Activated CD4-positive, alpha-beta T cell treated with anti-CD3 and anti-CD28 coated beads for 36 hours (primary cell): ENCODE measurements at regions of chr2 and their contacts with region 1.

Region 1: GRCh38 chr2:55617175-55618024 is at the start of gene PPP4R3B:
- DNase-seq: peak; percentile 99
- ATAC-seq: peak; percentile 87
- H3K4me3 Mint-ChIP-seq: no peak within 1 kb of the TSS
- H3K27ac Mint-ChIP-seq: no peak within 1 kb of the TSS
- H3K4me1 Mint-ChIP-seq: peaks cover 27% of the 10 kb centered on the region
- H3K27me3 Mint-ChIP-seq: no peaks in the 10 kb centered on the region
- total RNA-seq, gene PPP4R3B: 67.5 to 74.1 TPM

Region 2: GRCh38 chr2:53786705-53787612 is 1830.4 kb before region 1 on chr2 and contains the starts of genes ASB3 and ERLEC1:
- CTCF ChIA-PET with region 1: no interaction called
- POLR2A ChIA-PET with region 1: no interaction called
- intact Hi-C with region 1: loop called in 1 of 2 experiments (anchors 5 kb)
- DNase-seq: peak; percentile 93
- ATAC-seq: peak; percentile 91
- H3K4me3 Mint-ChIP-seq: peak within 1 kb of the TSS; percentile 100
- H3K27ac Mint-ChIP-seq: peak within 1 kb of the TSS; percentile 95
- H3K4me1 Mint-ChIP-seq: peaks cover 47% of the 10 kb centered on the region
- H3K27me3 Mint-ChIP-seq: no peaks in the 10 kb centered on the region
- total RNA-seq, gene ASB3: 17.3 to 23.4 TPM
- total RNA-seq, gene ERLEC1: 18.3 to 20.5 TPM

Region 3: DNA sequence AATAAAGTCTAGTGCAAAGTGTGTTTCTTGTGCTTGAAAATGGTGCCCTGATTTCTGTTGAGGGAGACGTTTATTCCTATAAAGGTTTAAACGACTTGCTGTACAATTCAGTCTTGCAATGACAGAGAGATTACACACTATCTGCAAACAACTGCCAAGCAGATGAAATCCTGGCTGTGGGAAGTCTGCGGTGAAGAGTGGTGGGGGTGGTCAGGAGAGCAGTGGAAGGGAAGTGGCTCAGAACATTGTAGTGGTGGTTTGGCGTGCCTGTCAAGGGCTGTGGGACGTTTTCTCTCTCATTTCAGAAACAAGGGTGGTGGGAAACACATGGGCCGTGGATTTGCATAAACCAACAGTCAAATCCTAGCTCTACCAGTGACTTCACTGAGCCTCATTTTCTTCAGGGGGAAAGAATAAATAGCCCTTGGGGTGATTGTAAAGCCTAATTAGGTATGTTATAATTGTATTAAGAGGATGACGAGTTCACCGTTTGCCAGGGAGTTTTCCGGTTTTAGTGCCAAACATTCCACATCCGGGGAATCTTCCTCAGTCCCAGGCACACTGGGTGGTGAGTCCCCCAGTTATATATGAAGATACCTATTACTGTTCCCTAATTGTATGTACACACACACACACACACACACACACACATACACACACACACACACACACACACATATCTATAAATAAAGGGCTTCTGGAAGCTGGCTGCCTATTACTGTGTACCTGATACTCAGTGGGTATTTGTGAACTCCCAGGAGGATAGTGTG is 1046.3 kb before region 1 on chr2:
- CTCF ChIA-PET with region 1: no interaction called
- POLR2A ChIA-PET with region 1: no interaction called
- intact Hi-C with region 1: loop called (anchors 10 kb)
- DNase-seq: peak; percentile 90
- ATAC-seq: peak; percentile 50
- H3K4me3 Mint-ChIP-seq: peak overlapping the region; percentile 65
- H3K27ac Mint-ChIP-seq: peak overlapping the region; percentile 99
- H3K4me1 Mint-ChIP-seq: peaks cover 90% of the 10 kb centered on the region
- H3K27me3 Mint-ChIP-seq: no peaks in the 10 kb centered on the region

Region 4: DNA sequence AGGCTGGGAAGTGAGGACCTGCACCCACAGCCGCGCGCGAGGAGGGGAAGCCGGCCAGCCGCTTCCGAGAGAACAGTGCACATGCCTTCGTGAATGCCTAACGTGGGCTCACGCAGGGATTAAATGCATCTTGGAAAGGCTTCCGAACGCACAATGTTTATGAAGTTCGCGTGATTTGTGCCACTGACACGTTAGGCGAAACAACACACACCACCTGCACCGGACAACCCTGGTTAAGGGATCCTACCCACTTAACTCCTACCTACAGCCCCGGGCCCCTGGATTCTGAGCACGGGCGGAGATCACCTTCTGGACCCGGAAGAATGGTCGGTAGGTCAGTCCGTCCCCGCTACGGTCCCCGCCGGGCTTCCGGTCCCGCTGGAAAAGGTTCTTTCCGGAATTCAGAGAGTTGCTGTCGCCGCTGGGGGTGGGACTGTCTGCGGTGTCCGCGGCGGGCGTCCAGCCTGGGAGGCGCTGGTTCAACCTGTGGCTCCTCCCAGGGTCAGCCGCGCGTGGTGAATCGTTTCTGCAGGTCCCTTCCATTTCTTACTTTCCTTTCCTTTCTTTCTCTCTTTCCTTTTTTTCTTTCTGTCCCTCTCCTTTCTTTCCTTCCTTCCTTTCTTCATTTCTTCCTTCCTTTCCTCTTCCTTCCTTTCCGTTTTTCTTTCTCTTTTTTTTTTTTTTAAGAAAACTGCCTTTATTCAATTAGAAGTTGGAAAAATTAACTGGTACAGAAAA is 348.3 kb before region 1 on chr2 and contains the start of gene MTIF2:
- CTCF ChIA-PET with region 1: interaction called, 3 read pairs
- POLR2A ChIA-PET with region 1: no interaction called
- intact Hi-C with region 1: loop called in 1 of 2 experiments (anchors 1 kb)
- DNase-seq: peak; percentile 94
- ATAC-seq: peak; percentile 95
- H3K4me3 Mint-ChIP-seq: peak within 1 kb of the TSS; percentile 96
- H3K27ac Mint-ChIP-seq: peak within 1 kb of the TSS; percentile 95
- H3K4me1 Mint-ChIP-seq: peaks cover 10% of the 10 kb centered on the region
- H3K27me3 Mint-ChIP-seq: no peaks in the 10 kb centered on the region
- total RNA-seq, gene MTIF2: 37.3 to 43.2 TPM

Region 5: GRCh38 chr2:55419679-55420438 is 197.5 kb before region 1 on chr2 and contains the start of gene CCDC88A:
- CTCF ChIA-PET with region 1: no interaction called
- POLR2A ChIA-PET with region 1: no interaction called
- intact Hi-C with region 1: loop called (anchors 1 kb)
- DNase-seq: peak; percentile 92
- ATAC-seq: peak; percentile 88
- H3K4me3 Mint-ChIP-seq: peak within 1 kb of the TSS; percentile 77
- H3K27ac Mint-ChIP-seq: peak within 1 kb of the TSS; percentile 69
- H3K4me1 Mint-ChIP-seq: peaks cover 34% of the 10 kb centered on the region
- H3K27me3 Mint-ChIP-seq: peaks cover 13% of the 10 kb centered on the region
- total RNA-seq, gene CCDC88A: 10.1 to 11.3 TPM

Region 6: DNA sequence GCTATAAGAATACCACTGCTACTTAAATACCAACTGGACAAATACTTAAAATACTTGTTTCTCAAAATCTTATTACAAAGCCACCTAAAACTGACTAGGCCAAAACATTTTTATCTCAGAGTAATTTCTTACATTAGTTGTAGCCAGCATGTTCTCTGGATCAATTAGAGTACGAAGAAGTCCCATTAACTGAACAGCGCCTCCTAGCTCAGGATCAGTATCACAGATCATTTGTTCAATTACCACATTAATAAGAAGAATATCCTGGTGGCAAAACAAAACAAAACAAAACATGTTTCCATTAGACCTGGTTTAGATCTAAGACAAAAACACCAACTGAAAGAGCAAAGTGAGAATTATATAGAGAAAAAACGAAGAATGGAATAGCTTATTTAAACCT is 36.0 kb before region 1 on chr2:
- CTCF ChIA-PET with region 1: no interaction called
- POLR2A ChIA-PET with region 1: no interaction called
- intact Hi-C with region 1: loop called in 1 of 2 experiments (anchors 5 kb)
- DNase-seq: no peak
- ATAC-seq: no peak
- H3K4me3 Mint-ChIP-seq: no peak overlapping the region
- H3K27ac Mint-ChIP-seq: no peak overlapping the region
- H3K4me1 Mint-ChIP-seq: peaks cover 24% of the 10 kb centered on the region
- H3K27me3 Mint-ChIP-seq: no peaks in the 10 kb centered on the region

Region 7: DNA sequence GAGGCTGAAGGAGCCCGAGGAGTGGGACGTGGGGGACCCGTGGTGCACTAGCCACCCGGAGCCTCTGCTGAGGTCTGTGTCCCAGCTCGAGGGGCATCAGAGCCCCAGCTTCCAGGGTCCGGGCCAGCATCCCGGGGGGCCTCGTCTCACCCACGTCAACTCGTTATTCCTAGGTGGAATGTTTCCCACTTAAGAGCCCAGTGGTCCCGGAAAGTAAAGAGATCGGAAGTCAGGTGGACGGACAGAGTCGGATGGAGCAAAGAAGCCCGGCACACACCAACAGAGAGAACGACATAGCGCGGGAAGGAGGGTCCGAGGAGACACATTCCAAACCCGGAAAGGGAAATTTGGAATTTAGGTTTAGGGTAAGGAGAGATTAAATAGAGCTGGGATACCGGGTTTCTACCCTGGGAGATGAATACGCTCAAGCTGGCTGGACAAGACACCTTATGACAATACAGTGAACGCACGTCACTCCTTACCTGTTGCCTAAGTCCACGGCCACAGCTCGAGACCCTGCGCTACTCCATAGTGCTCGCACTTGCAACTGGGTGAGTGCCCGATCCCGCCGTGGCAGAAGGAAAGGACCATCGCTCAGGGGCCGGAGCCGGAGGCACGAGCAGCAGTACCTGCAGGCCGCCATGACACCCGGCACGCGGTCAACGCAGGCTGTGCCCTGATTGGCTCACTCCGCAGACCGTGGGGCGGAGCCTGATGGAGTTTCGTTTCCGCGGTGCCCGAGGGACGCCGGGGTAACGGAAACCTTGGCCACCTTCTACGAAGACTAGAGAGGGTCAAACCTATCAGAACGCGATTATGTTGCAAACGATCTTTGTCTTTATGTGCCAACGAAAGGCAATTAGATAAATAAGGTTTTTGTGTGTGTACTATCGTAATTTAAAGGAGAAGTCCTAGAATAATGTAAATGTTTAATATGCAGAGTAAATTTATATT is 76.1 kb after region 1 on chr2 and contains the start of gene PNPT1:
- CTCF ChIA-PET with region 1: no interaction called
- POLR2A ChIA-PET with region 1: no interaction called
- intact Hi-C with region 1: loop called (anchors 1 to 5 kb)
- DNase-seq: peak; percentile 97
- ATAC-seq: peak; percentile 100
- H3K4me3 Mint-ChIP-seq: peak within 1 kb of the TSS; percentile 98
- H3K27ac Mint-ChIP-seq: peak within 1 kb of the TSS; percentile 96
- H3K4me1 Mint-ChIP-seq: peaks cover 32% of the 10 kb centered on the region
- H3K27me3 Mint-ChIP-seq: no peaks in the 10 kb centered on the region
- total RNA-seq, gene PNPT1: 41.1 to 54.0 TPM